CD8-positive, alpha-beta T cell (primary cell): ENCODE measurements at regions of chr16 and their contacts with region 1.

Region 1: DNA sequence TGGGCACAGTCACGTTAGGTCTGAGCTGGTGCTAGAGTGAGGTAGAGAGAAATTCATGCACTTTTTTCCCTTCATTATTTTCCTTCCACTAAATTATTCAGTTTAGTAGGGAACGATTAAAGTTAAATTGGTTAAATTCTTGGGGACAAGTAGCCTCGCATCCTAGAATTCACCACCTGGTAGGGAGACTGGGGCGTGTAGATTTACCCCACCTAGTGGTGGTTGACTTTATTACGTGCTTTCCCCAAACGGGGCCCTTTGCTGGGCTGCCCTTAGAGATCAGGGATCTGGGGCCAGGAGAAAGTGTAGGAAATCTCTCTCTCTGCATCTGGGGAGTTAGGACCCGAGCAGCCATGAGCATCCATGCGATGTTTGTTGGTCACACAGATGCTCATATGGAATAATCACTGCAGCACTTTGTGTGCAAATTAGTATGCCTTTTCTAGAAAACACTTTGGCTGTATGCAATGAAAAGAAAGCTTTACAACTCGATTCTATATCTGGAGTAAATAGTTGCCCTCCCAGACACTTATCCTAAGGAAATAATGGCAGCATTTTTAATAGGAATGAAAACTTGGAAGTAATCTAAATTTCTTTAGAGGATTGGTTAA is 107.0 kb downstream of the PLCG2 start:
- DNase-seq: peak in 4 of 9 experiments; percentile 14 to 52 (median 26)
- ATAC-seq: peak; percentile 61
- H3K4me3 ChIP-seq: no peak overlapping the region
- H3K4me3 Mint-ChIP-seq: no peak overlapping the region
- H3K27ac ChIP-seq: no peak overlapping the region
- H3K27ac Mint-ChIP-seq: no peak overlapping the region
- H3K4me1 ChIP-seq: no peaks in the 10 kb centered on the region
- H3K4me1 Mint-ChIP-seq: no peaks in the 10 kb centered on the region
- H3K27me3 ChIP-seq: no peaks in the 10 kb centered on the region
- H3K27me3 Mint-ChIP-seq: no peaks in the 10 kb centered on the region
- CTCF ChIP-seq: peak; percentile 68

Region 2: GRCh38 chr16:81873843-81874752 is 12.0 kb before region 1 on chr16:
- CTCF ChIA-PET with region 1: interaction called, 12 read pairs
- POLR2A ChIA-PET with region 1: no interaction called
- intact Hi-C with region 1: no loop called
- DNase-seq: peak; percentile 6 to 76 (median 48)
- ATAC-seq: peak; percentile 74
- H3K4me3 ChIP-seq: no peak overlapping the region
- H3K4me3 Mint-ChIP-seq: no peak overlapping the region
- H3K27ac ChIP-seq: no peak overlapping the region
- H3K27ac Mint-ChIP-seq: no peak overlapping the region
- H3K4me1 ChIP-seq: no peaks in the 10 kb centered on the region
- H3K4me1 Mint-ChIP-seq: peaks cover 15% of the 10 kb centered on the region
- H3K27me3 ChIP-seq: no peaks in the 10 kb centered on the region
- H3K27me3 Mint-ChIP-seq: no peaks in the 10 kb centered on the region
- CTCF ChIP-seq: peak; percentile 81

Region 3: DNA sequence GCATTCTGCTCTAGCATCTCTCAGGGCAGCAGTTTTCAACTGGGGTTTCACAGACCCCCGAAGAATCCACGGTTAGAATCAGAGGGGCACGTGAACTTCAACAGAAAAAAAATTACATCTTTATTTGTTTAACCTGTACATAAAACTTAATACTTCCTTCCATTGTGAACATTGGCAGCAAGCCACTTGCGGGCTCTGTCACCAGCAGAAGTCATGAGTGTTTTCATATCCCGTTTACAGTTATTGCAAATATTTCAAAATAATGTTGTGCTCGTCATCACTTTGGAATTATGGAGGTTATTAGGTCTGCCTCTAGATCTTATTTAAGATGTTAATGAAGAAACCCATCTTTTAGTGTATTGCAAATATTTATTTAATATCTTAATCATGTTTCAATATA is 15.4 kb after region 1 on chr16:
- CTCF ChIA-PET with region 1: interaction called, 19 read pairs
- POLR2A ChIA-PET with region 1: no interaction called
- intact Hi-C with region 1: no loop called
- DNase-seq: no peak
- ATAC-seq: no peak
- H3K4me3 ChIP-seq: no peak overlapping the region
- H3K4me3 Mint-ChIP-seq: no peak overlapping the region
- H3K27ac ChIP-seq: no peak overlapping the region
- H3K27ac Mint-ChIP-seq: no peak overlapping the region
- H3K4me1 ChIP-seq: no peaks in the 10 kb centered on the region
- H3K4me1 Mint-ChIP-seq: no peaks in the 10 kb centered on the region
- H3K27me3 ChIP-seq: no peaks in the 10 kb centered on the region
- H3K27me3 Mint-ChIP-seq: no peaks in the 10 kb centered on the region
- CTCF ChIP-seq: no peak

Region 4: GRCh38 chr16:81928975-81929374 is 42.9 kb after region 1 on chr16:
- CTCF ChIA-PET with region 1: no interaction called
- POLR2A ChIA-PET with region 1: no interaction called
- intact Hi-C with region 1: no loop called
- DNase-seq: no peak
- ATAC-seq: no peak
- H3K4me3 ChIP-seq: no peak overlapping the region
- H3K4me3 Mint-ChIP-seq: no peak overlapping the region
- H3K27ac ChIP-seq: no peak overlapping the region
- H3K27ac Mint-ChIP-seq: no peak overlapping the region
- H3K4me1 ChIP-seq: no peaks in the 10 kb centered on the region
- H3K4me1 Mint-ChIP-seq: no peaks in the 10 kb centered on the region
- H3K27me3 ChIP-seq: no peaks in the 10 kb centered on the region
- H3K27me3 Mint-ChIP-seq: no peaks in the 10 kb centered on the region
- CTCF ChIP-seq: no peak